H1 (cell line): ENCODE measurements at regions of chr1 and their contacts with region 1.

Region 1: GRCh38 chr1:15937706-15938168 is 38.2 kb downstream of the ZBTB17 start:
- DNase-seq: peak in 1 of 2 experiments; percentile 57
- H3K4me3 ChIP-seq: no peak overlapping the region
- H3K27ac ChIP-seq: peak overlapping the region; percentile 22; the same call in 1 of the 2 replicates
- H3K4me1 ChIP-seq: no peaks in the 10 kb centered on the region
- H3K27me3 ChIP-seq: no peaks in the 10 kb centered on the region; a peak in 1 of 7 replicates
- CTCF ChIP-seq: peak in 2 of 3 experiments; percentile 40 to 53; a peak in 3 of 4 replicates
- EP300 ChIP-seq: no peak
- POLR2A ChIP-seq: no peak
- RAD21 ChIP-seq: peak; percentile 45 to 59

Region 2: DNA sequence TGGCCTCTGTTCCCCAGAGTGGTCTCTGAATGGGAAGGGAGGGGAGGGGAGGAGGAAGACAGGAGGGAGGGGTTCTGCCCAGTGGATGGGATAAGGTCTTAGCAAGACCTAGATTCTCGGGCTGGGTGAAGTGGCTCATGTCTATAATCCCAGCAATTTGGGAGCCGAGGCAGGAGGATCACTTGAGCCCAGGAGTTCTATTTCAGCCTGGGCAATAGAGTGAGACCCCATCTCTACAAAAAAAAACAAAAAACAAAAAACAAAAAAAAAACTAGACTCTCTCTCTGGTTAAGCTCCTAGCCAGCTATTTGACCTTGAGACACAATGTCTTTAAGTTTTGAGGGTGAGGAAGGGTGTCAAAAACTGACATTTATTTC is 141.7 kb before region 1 on chr1:
- CTCF ChIA-PET with region 1: interaction called, 30 read pairs
- POLR2A ChIA-PET with region 1: no interaction called
- DNase-seq: no peak
- H3K4me3 ChIP-seq: no peak overlapping the region
- H3K27ac ChIP-seq: no peak overlapping the region
- H3K4me1 ChIP-seq: peaks cover 0 to 18% (median 12%) of the 10 kb centered on the region in 4 experiments; a peak in 6 of 7 replicates
- H3K27me3 ChIP-seq: no peaks in the 10 kb centered on the region
- CTCF ChIP-seq: no peak
- EP300 ChIP-seq: no peak
- POLR2A ChIP-seq: no peak
- RAD21 ChIP-seq: no peak

Region 3: DNA sequence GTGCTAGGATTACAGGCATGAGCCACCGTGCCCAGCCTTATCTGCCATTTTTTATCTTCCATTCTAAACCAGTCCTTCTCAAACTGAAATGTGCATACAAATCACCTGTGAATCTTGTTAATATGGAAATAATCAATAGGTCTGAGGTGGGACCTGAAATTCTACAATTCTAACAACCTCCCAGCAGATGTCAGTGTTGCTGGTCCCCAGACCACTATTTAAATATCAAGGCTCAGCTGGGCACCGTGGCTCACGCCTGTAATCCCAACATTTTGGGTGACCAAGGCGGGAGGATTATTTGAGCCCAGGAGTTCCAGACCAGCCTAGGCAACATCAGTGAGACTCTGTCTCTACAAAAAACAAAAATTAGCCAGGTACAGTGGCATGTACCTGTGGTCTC is 134.4 kb before region 1 on chr1:
- CTCF ChIA-PET with region 1: interaction called, 25 read pairs
- POLR2A ChIA-PET with region 1: no interaction called
- DNase-seq: peak in 1 of 2 experiments; percentile 68
- H3K4me3 ChIP-seq: no peak overlapping the region
- H3K27ac ChIP-seq: no peak overlapping the region
- H3K4me1 ChIP-seq: peaks cover 0 to 18% (median 12%) of the 10 kb centered on the region in 4 experiments; a peak in 6 of 7 replicates
- H3K27me3 ChIP-seq: no peaks in the 10 kb centered on the region
- CTCF ChIP-seq: peak; percentile 19 to 67 (median 55)
- EP300 ChIP-seq: no peak
- POLR2A ChIP-seq: no peak
- RAD21 ChIP-seq: peak; percentile 66 to 81

Region 4: GRCh38 chr1:15916417-15916816 is 21.3 kb before region 1 on chr1:
- CTCF ChIA-PET with region 1: interaction called, 11 read pairs
- POLR2A ChIA-PET with region 1: no interaction called
- DNase-seq: no peak
- H3K4me3 ChIP-seq: no peak overlapping the region
- H3K27ac ChIP-seq: no peak overlapping the region
- H3K4me1 ChIP-seq: no peaks in the 10 kb centered on the region
- H3K27me3 ChIP-seq: no peaks in the 10 kb centered on the region
- CTCF ChIP-seq: no peak
- EP300 ChIP-seq: no peak
- POLR2A ChIP-seq: no peak
- RAD21 ChIP-seq: no peak

Region 5: GRCh38 chr1:15923241-15923640 is 14.5 kb before region 1 on chr1:
- CTCF ChIA-PET with region 1: interaction called, 19 read pairs
- POLR2A ChIA-PET with region 1: interaction called, 4 read pairs
- DNase-seq: no peak
- H3K4me3 ChIP-seq: no peak overlapping the region
- H3K27ac ChIP-seq: no peak overlapping the region
- H3K4me1 ChIP-seq: no peaks in the 10 kb centered on the region
- H3K27me3 ChIP-seq: no peaks in the 10 kb centered on the region
- CTCF ChIP-seq: no peak
- EP300 ChIP-seq: no peak
- POLR2A ChIP-seq: no peak
- RAD21 ChIP-seq: no peak